SK-N-SH (cell line): ENCODE measurements at regions of chr21 and their contacts with region 1.

Region 1: GRCh38 chr21:16330082-16330907 is 600.5 kb downstream of the USP25 start:
- DNase-seq: peak; percentile 39
- H3K4me3 ChIP-seq: no peak overlapping the region
- H3K27ac ChIP-seq: no peak overlapping the region
- H3K4me1 ChIP-seq: no peaks in the 10 kb centered on the region; a peak in 1 of 4 replicates
- H3K27me3 ChIP-seq: no peaks in the 10 kb centered on the region
- CTCF ChIP-seq: peak; percentile 75
- EP300 ChIP-seq: no peak
- RAD21 ChIP-seq: peak; percentile 85

Region 2: GRCh38 chr21:16002874-16003466 is 327.3 kb before region 1 on chr21:
- CTCF ChIA-PET with region 1: interaction called, 14 read pairs
- POLR2A ChIA-PET with region 1: no interaction called
- DNase-seq: peak; percentile 34
- H3K4me3 ChIP-seq: no peak overlapping the region
- H3K27ac ChIP-seq: no peak overlapping the region
- H3K4me1 ChIP-seq: no peaks in the 10 kb centered on the region; a peak in 1 of 4 replicates
- H3K27me3 ChIP-seq: no peaks in the 10 kb centered on the region
- CTCF ChIP-seq: peak; percentile 55
- EP300 ChIP-seq: no peak
- RAD21 ChIP-seq: peak; percentile 74